Activated naive CD4-positive, alpha-beta T cell treated with anti-CD3 and anti-CD28 coated beads for 36 hours (primary cell): ENCODE measurements at regions of chr3 and their contacts with region 1.

Region 1: GRCh38 chr3:63877737-63878393 is 14.2 kb downstream of the ATXN7 start:
- DNase-seq: no peak
- H3K4me3 Mint-ChIP-seq: no peak overlapping the region
- H3K27ac Mint-ChIP-seq: peak overlapping the region; percentile 22
- H3K4me1 Mint-ChIP-seq: peaks cover 57% of the 10 kb centered on the region
- H3K27me3 Mint-ChIP-seq: no peaks in the 10 kb centered on the region

Region 2: DNA sequence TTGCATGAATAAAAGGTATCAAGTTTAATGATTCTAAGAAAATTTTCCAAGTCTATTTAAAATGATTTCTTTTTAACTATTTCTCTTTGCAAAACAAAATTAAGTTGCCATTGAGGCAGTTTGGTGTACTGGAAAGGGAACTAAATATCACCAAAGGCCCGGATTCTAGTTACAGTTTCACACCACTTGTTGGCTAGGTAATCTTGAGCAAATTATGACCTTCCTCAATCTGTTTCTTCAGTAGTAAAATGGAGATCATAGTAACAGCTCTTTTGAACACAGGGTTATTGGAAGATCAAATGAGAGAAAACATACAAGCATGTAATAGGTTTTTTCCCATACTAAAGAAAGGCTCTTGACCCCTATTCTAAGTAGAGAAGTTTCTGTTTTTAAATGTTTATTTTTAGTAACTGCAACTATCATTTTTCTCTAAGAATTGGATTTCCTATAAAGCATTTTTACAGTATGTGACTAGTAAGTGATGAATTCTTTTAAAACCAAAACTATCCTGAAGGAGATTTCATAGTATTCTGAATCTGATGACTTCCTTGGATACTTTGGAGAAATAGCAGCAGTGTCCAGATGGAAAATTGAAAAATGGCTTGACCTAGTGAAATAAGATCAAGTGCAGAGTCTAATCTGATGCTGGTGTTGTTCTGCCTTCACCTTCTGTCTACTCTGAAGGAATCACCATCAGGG is 18.6 kb after region 1 on chr3:
- CTCF ChIA-PET with region 1: interaction called, 5 read pairs
- intact Hi-C with region 1: loop called (anchors 2 kb)
- DNase-seq: no peak
- H3K4me3 Mint-ChIP-seq: no peak overlapping the region
- H3K27ac Mint-ChIP-seq: no peak overlapping the region
- H3K4me1 Mint-ChIP-seq: peaks cover 45% of the 10 kb centered on the region
- H3K27me3 Mint-ChIP-seq: no peaks in the 10 kb centered on the region